ENCODE measurements at regions of chr2 and their contacts with region 1.

Region 1: GRCh38 chr2:238720232-238720672 is 127.6 kb upstream of the TWIST2 start:
- DNase-seq: peak; percentile 90
- H3K4me3 ChIP-seq: no peak overlapping the region
- H3K27ac ChIP-seq: no peak overlapping the region
- H3K4me1 ChIP-seq: peaks cover 4 to 21% (median 15%) of the 10 kb centered on the region in 4 donors
- H3K27me3 ChIP-seq: no peaks in the 10 kb centered on the region
- CTCF ChIP-seq: peak; percentile 65 to 78 (median 75)
- EP300 ChIP-seq: no peak
- POLR2A ChIP-seq: no peak

Region 2: DNA sequence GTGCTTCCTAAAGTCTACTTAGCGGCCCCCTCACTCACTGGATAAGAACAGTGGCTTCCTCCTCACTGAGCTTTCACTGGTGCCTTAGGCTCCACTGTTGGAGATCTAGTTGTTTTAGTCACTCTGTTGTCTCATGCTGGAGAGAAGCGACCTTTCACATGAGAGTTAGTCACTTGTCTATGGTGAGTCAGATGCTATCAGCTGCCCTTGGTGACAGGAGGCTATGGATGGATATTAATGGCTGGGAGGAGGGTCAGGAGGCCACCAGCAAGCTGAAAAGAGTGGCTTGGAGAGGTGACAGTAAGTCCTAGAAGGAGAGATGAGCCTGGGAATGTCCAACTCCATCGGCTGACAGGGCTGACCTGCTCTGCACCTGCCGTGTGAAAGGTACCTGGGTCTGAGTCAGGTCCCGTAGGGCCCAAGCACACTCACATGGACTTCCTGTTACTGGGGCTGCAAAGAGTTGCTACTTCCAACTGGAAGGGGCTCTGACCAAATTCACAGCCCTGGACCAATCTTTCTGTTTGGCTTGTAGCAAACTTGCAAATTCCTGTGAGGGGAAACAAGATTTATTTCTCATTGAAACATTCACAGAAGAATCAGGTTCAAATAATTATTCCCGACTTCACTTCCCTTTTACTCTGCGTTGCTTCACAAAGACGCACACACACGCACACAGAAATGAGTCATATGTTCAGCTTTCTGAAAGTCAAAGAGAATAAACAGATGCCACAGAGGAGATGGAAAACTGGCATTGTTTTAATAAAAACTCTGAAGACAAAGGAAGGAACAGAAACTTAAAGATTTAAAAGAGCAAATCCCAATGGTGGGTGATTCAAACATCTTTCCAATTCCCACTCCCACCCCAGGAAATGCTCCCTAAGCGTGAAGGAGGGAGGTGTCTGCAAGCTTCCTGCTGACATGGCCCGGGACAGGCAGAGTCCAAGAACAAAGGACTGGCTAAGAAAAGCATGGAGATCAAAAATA is 75.9 kb before region 1 on chr2:
- intact Hi-C with region 1: loop called (anchors 5 kb)
- DNase-seq: peak; percentile 91
- H3K4me3 ChIP-seq: no peak overlapping the region
- H3K27ac ChIP-seq: peak overlapping the region; percentile 81 to 86 (median 85)
- H3K4me1 ChIP-seq: peaks cover 3 to 36% (median 33%) of the 10 kb centered on the region in 4 donors
- H3K27me3 ChIP-seq: no peaks in the 10 kb centered on the region
- CTCF ChIP-seq: no peak
- EP300 ChIP-seq: peak; percentile 74
- POLR2A ChIP-seq: no peak

Region 3: GRCh38 chr2:238835726-238836301 is 115.6 kb after region 1 on chr2:
- intact Hi-C with region 1: no loop called
- DNase-seq: peak; percentile 89
- H3K4me3 ChIP-seq: no peak overlapping the region
- H3K27ac ChIP-seq: no peak overlapping the region
- H3K4me1 ChIP-seq: peaks cover 0 to 7% (median 2%) of the 10 kb centered on the region in 4 donors
- H3K27me3 ChIP-seq: peaks cover 0 to 4% (median 0%) of the 10 kb centered on the region in 4 donors
- CTCF ChIP-seq: no peak
- EP300 ChIP-seq: no peak
- POLR2A ChIP-seq: no peak

Region 4: GRCh38 chr2:238895891-238896600 is 175.8 kb after region 1 on chr2:
- intact Hi-C with region 1: no loop called
- DNase-seq: peak; percentile 94
- H3K4me3 ChIP-seq: peak overlapping the region in 3 of 4 donors; percentile 4 to 16 (median 9)
- H3K27ac ChIP-seq: peak overlapping the region; percentile 26 to 65 (median 42)
- H3K4me1 ChIP-seq: peaks cover 10 to 79% (median 66%) of the 10 kb centered on the region in 4 donors
- H3K27me3 ChIP-seq: no peaks in the 10 kb centered on the region
- CTCF ChIP-seq: no peak
- EP300 ChIP-seq: no peak
- POLR2A ChIP-seq: no peak